Sigmoid colon (tissue), 7 donors: ENCODE measurements at regions of chr10 and their contacts with region 1.

Region 1: GRCh38 chr10:114346271-114347031 is 57.9 kb downstream of the AFAP1L2 start:
- DNase-seq: no peak
- H3K4me3 ChIP-seq: no peak overlapping the region
- H3K27ac ChIP-seq: peak overlapping the region; percentile 32 to 57 (median 44)
- H3K4me1 ChIP-seq: peaks cover 0 to 52% (median 27%) of the 10 kb centered on the region in 4 donors
- H3K27me3 ChIP-seq: no peaks in the 10 kb centered on the region
- CTCF ChIP-seq: no peak
- EP300 ChIP-seq: no peak
- POLR2A ChIP-seq: no peak

Region 2: GRCh38 chr10:114403541-114404161 is 57.2 kb after region 1 on chr10:
- intact Hi-C with region 1: loop called (anchors 5 kb)
- DNase-seq: peak; percentile 81
- H3K4me3 ChIP-seq: peak overlapping the region; percentile 46 to 62 (median 53)
- H3K27ac ChIP-seq: peak overlapping the region; percentile 71 to 78 (median 73)
- H3K4me1 ChIP-seq: peaks cover 0 to 66% (median 51%) of the 10 kb centered on the region in 4 donors
- H3K27me3 ChIP-seq: peaks cover 0 to 13% (median 5%) of the 10 kb centered on the region in 3 donors
- CTCF ChIP-seq: peak in 1 of 4 experiments; percentile 13
- EP300 ChIP-seq: no peak
- POLR2A ChIP-seq: no peak

Region 3: GRCh38 chr10:115157357-115157756 is 810.9 kb after region 1 on chr10:
- intact Hi-C with region 1: no loop called
- DNase-seq: no peak
- H3K4me3 ChIP-seq: no peak overlapping the region
- H3K27ac ChIP-seq: no peak overlapping the region
- H3K4me1 ChIP-seq: no peaks in the 10 kb centered on the region
- H3K27me3 ChIP-seq: no peaks in the 10 kb centered on the region
- CTCF ChIP-seq: no peak
- EP300 ChIP-seq: no peak
- POLR2A ChIP-seq: no peak